A673 (cell line): ENCODE measurements at regions of chr17 and their contacts with region 1.

Region 1: GRCh38 chr17:69574257-69575197 is 160.0 kb downstream of the MAP2K6 start:
- DNase-seq: no peak
- H3K4me3 ChIP-seq: no peak overlapping the region
- H3K27ac ChIP-seq: no peak overlapping the region
- H3K4me1 ChIP-seq: peaks cover 13% of the 10 kb centered on the region
- H3K27me3 ChIP-seq: no peaks in the 10 kb centered on the region
- CTCF ChIP-seq: no peak

Region 2: DNA sequence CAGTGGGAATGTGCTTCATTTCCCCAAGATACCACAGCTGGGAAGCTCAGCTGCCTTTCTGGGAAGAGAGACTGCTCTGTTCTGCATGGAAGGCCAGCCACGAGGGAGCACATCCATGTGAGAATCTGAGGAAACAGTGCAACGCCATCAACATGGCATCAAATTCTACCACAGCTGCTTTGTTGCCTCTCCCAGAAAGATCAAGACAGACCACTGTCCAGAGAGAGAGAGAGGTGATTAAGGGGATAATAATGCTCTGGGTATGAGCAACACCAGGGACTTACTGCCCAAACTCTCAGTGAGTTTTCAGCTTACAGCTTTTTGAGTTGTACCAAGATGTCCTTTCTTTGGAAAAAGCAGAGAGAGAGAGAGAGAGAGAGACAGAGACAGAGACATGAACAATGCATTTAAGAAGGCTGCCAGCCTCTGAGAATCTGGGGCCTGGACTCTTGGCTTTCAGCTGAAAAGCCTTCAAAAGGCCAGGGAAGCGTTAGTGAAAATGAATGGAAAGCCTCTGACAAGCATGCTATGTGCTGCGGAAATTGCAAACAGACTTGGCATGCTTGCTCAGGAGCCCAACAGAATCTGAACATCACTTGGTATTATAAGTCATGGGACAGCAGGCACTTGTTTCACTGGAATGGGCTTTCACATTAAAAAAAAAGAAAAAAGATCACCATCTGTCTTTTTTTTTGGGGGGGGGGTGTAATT is 63.1 kb after region 1 on chr17:
- CTCF ChIA-PET with region 1: no interaction called
- POLR2A ChIA-PET with region 1: no interaction called
- intact Hi-C with region 1: no loop called
- DNase-seq: no peak
- H3K4me3 ChIP-seq: no peak overlapping the region
- H3K27ac ChIP-seq: no peak overlapping the region
- H3K4me1 ChIP-seq: no peaks in the 10 kb centered on the region
- H3K27me3 ChIP-seq: peaks cover 3% of the 10 kb centered on the region
- CTCF ChIP-seq: no peak

Region 3: GRCh38 chr17:70099294-70099693 is 524.8 kb after region 1 on chr17:
- CTCF ChIA-PET with region 1: interaction called, 15 read pairs
- POLR2A ChIA-PET with region 1: no interaction called
- intact Hi-C with region 1: no loop called
- DNase-seq: no peak
- H3K4me3 ChIP-seq: no peak overlapping the region
- H3K27ac ChIP-seq: no peak overlapping the region
- H3K4me1 ChIP-seq: no peaks in the 10 kb centered on the region
- H3K27me3 ChIP-seq: peaks cover 32% of the 10 kb centered on the region
- CTCF ChIP-seq: no peak